MCF 10A (cell line): ENCODE measurements at regions of chr11 and their contacts with region 1.

Region 1: GRCh38 chr11:50174189-50174588 is 141.5 kb downstream of the OR4C45 start:
- DNase-seq: peak; percentile 74
- H3K4me3 Mint-ChIP-seq: no peak overlapping the region
- H3K27ac Mint-ChIP-seq: peak overlapping the region; percentile 83
- H3K4me1 Mint-ChIP-seq: peaks cover 19% of the 10 kb centered on the region
- H3K27me3 Mint-ChIP-seq: no peaks in the 10 kb centered on the region
- CTCF ChIP-seq: peak; percentile 40

Region 2: DNA sequence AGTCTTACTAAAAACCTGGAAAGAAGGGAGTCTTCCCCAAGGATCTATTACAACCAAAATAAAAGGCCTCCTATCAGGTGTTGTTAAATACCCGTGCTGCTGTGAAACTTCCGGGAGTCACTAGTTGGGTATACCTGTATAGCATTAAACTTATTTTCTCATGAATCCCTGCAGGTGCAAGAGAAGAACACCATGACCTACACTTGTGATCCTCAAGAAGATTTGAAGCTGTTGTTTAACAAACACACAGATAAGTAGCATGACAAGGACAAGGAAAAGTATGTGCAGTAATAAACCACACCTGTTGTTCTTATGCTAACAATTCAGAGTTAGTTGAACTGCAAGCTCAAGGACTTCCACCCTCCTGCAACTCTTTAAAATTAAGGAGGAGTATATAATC is 129.5 kb before region 1 on chr11:
- CTCF ChIA-PET with region 1: no interaction called
- POLR2A ChIA-PET with region 1: no interaction called
- intact Hi-C with region 1: no loop called
- DNase-seq: no peak
- H3K4me3 Mint-ChIP-seq: no peak overlapping the region
- H3K27ac Mint-ChIP-seq: no peak overlapping the region
- H3K4me1 Mint-ChIP-seq: no peaks in the 10 kb centered on the region
- H3K27me3 Mint-ChIP-seq: no peaks in the 10 kb centered on the region
- CTCF ChIP-seq: no peak

Region 3: DNA sequence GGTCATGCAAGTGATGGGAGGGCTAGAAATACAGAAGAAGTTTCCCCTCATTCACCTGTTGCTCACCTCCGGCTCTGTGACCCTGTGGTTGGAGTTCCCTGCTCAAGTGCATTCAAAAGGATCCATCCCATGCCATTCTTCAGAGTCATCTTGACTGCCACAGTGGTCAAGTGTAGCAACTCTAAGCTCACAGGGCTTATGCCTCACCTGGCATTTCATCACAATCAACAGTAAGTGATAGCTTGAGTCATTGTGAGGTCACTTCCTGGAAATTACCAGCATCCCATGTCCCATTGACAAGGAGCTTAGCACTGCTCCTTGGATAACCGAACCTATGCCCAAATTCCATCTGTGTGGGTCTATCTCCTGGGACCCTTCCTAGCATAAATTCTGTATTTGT is 86.0 kb before region 1 on chr11:
- CTCF ChIA-PET with region 1: no interaction called
- POLR2A ChIA-PET with region 1: no interaction called
- intact Hi-C with region 1: loop called (anchors 5 kb)
- DNase-seq: peak; percentile 39
- H3K4me3 Mint-ChIP-seq: no peak overlapping the region
- H3K27ac Mint-ChIP-seq: no peak overlapping the region
- H3K4me1 Mint-ChIP-seq: peaks cover 6% of the 10 kb centered on the region
- H3K27me3 Mint-ChIP-seq: no peaks in the 10 kb centered on the region
- CTCF ChIP-seq: no peak

Region 4: GRCh38 chr11:50102916-50103315 is 71.3 kb before region 1 on chr11:
- CTCF ChIA-PET with region 1: no interaction called
- POLR2A ChIA-PET with region 1: no interaction called
- intact Hi-C with region 1: no loop called
- DNase-seq: no peak
- H3K4me3 Mint-ChIP-seq: no peak overlapping the region
- H3K27ac Mint-ChIP-seq: no peak overlapping the region
- H3K4me1 Mint-ChIP-seq: peaks cover 4% of the 10 kb centered on the region
- H3K27me3 Mint-ChIP-seq: no peaks in the 10 kb centered on the region
- CTCF ChIP-seq: no peak

Region 5: GRCh38 chr11:50192743-50193142 is 18.6 kb after region 1 on chr11:
- CTCF ChIA-PET with region 1: no interaction called
- POLR2A ChIA-PET with region 1: no interaction called
- intact Hi-C with region 1: no loop called
- DNase-seq: no peak
- H3K4me3 Mint-ChIP-seq: no peak overlapping the region
- H3K27ac Mint-ChIP-seq: no peak overlapping the region
- H3K4me1 Mint-ChIP-seq: no peaks in the 10 kb centered on the region
- H3K27me3 Mint-ChIP-seq: no peaks in the 10 kb centered on the region
- CTCF ChIP-seq: no peak